ENCODE measurements at regions of chr7 and their contacts with region 1.

Region 1: GRCh38 chr7:116929914-116930913 is 23.1 kb upstream of the ST7 start:
- DNase-seq: peak; percentile 71 to 89 (median 84)
- H3K4me3 ChIP-seq: no peak overlapping the region
- H3K27ac ChIP-seq: no peak overlapping the region
- H3K4me1 ChIP-seq: no peaks in the 10 kb centered on the region
- H3K27me3 ChIP-seq: no peaks in the 10 kb centered on the region
- CTCF ChIP-seq: peak; percentile 79 to 85 (median 81)
- EP300 ChIP-seq: no peak
- POLR2A ChIP-seq: no peak

Region 2: GRCh38 chr7:117119192-117119924 is 189.1 kb after region 1 on chr7:
- intact Hi-C with region 1: loop called in 3 of 4 experiments (anchors 5 to 10 kb)
- DNase-seq: peak; percentile 70 to 87 (median 82)
- H3K4me3 ChIP-seq: no peak overlapping the region
- H3K27ac ChIP-seq: no peak overlapping the region
- H3K4me1 ChIP-seq: no peaks in the 10 kb centered on the region
- H3K27me3 ChIP-seq: no peaks in the 10 kb centered on the region
- CTCF ChIP-seq: peak; percentile 42 to 66 (median 61)
- EP300 ChIP-seq: no peak
- POLR2A ChIP-seq: no peak

Region 3: GRCh38 chr7:117127585-117128168 is 197.5 kb after region 1 on chr7:
- intact Hi-C with region 1: loop called in 2 of 4 experiments (anchors 5 to 10 kb)
- DNase-seq: peak in 4 of 5 donors; percentile 11 to 60 (median 39)
- H3K4me3 ChIP-seq: no peak overlapping the region
- H3K27ac ChIP-seq: no peak overlapping the region
- H3K4me1 ChIP-seq: no peaks in the 10 kb centered on the region
- H3K27me3 ChIP-seq: no peaks in the 10 kb centered on the region
- CTCF ChIP-seq: peak; percentile 56 to 67 (median 61)
- EP300 ChIP-seq: no peak
- POLR2A ChIP-seq: no peak